Naive thymus-derived CD4-positive, alpha-beta T cell (primary cell): ENCODE measurements at regions of chr1 and their contacts with region 1.

Region 1: DNA sequence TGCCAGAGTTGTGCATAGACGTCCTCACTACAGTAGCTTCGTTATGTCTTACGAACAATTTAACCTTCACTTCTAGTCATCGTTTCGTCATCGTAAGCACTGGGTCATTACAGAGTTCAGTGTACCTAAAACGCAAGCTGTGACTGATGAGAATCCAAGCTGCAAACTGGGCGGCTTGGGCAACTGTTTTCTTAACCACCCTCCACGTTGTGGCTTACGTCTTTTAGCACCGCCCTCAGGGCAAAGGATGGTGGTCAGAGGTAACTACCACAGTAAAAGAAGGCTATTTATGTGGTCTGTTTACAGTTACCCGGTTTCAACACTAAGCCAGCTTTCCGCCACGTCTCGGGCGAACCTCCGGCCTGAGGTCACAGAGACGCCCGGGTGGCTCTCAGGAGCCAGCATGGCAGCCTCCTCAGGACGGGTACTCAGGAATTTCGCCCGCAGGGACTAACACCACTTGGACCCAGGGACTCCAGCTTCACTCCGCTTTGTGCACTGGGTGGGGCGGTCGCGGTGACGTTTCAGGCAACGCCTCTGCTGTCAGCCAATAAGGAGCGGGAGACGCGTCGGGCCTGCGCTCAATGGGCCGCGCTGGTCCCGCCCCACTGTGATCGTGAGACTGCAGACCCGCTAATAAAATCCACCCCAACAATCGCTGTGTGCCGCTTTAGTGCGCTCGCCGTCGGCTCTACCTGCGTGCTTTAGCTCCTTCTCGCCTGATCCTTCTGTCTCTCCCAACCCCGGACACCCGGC is at the start of gene CTH:
- DNase-seq: peak; percentile 81 to 94 (median 92)
- ATAC-seq: peak; percentile 96
- H3K4me3 ChIP-seq: peak within 1 kb of the TSS; percentile 85
- H3K4me3 Mint-ChIP-seq: peak within 1 kb of the TSS; percentile 90 to 100 (median 98)
- H3K27ac ChIP-seq: peak within 1 kb of the TSS; percentile 85
- H3K27ac Mint-ChIP-seq: peak within 1 kb of the TSS; percentile 82 to 99 (median 96)
- H3K4me1 ChIP-seq: peaks cover 4 to 9% of the 10 kb centered on the region in 2 donors
- H3K4me1 Mint-ChIP-seq: peaks cover 5 to 26% (median 24%) of the 10 kb centered on the region in 7 donors
- H3K27me3 ChIP-seq: no peaks in the 10 kb centered on the region
- H3K27me3 Mint-ChIP-seq: peaks cover 0 to 10% (median 0%) of the 10 kb centered on the region in 5 donors
- total RNA-seq, gene CTH: 2.6 to 7.1 (median 5.1) TPM

Region 2: DNA sequence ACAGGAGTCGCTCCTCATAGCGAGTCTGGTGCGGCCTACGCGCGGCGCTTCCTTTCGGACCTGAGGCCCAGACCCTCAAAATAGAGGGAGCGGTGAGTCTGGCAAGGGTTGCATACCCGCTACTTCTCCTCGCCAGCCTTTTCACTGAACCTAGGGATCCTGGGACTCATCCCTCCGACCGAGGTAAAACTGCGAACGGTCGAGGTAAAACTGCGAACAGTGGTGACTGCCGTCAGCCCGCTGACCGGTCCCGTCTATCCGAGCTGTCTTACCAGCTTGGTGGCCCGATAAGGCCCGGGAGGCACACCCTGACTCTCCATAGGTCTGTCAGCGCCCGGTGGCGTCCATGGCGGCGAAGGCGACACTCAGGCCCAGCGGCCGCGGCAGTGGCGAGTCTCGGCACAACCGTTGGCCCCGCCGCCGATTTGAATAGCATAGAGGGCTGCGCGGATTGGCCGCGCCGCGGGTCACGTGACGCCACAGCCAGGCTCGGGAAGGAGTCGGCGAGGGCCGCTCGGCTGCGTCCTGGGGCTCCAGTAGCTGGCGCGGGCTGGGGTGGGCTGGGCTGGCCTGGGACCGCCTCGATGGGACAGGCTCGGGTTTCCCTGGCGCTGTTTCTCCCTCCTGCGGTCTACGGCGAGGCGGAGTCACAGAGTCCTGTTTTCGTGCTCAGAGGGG is 1914.0 kb before region 1 on chr1 and contains the start of gene DEPDC1:
- CTCF ChIA-PET with region 1: no interaction called
- POLR2A ChIA-PET with region 1: no interaction called
- intact Hi-C with region 1: loop called in 1 of 2 experiments (anchors 5 kb)
- DNase-seq: peak; percentile 10 to 91 (median 42)
- ATAC-seq: peak; percentile 94
- H3K4me3 ChIP-seq: peak within 1 kb of the TSS; percentile 70
- H3K4me3 Mint-ChIP-seq: peak within 1 kb of the TSS; percentile 68 to 94 (median 81)
- H3K27ac ChIP-seq: no peak within 1 kb of the TSS
- H3K27ac Mint-ChIP-seq: peak within 1 kb of the TSS in 1 of 9 donors; percentile 87
- H3K4me1 ChIP-seq: peaks cover 0 to 5% of the 10 kb centered on the region in 2 donors
- H3K4me1 Mint-ChIP-seq: peaks cover 0 to 35% (median 13%) of the 10 kb centered on the region in 7 donors
- H3K27me3 ChIP-seq: no peaks in the 10 kb centered on the region
- H3K27me3 Mint-ChIP-seq: peaks cover 20 to 39% (median 25%) of the 10 kb centered on the region in 5 donors
- total RNA-seq, gene DEPDC1: 0.13 to 12.6 (median 0.24) TPM in 3 of 5 experiments, not detected in the others

Region 3: GRCh38 chr1:70221241-70222121 is 189.3 kb before region 1 on chr1 and contains the start of gene SRSF11:
- CTCF ChIA-PET with region 1: no interaction called
- POLR2A ChIA-PET with region 1: interaction called, 10 read pairs
- intact Hi-C with region 1: loop called (anchors 1 kb)
- DNase-seq: peak; percentile 93 to 98 (median 96)
- ATAC-seq: peak; percentile 98
- H3K4me3 ChIP-seq: peak within 1 kb of the TSS; percentile 85
- H3K4me3 Mint-ChIP-seq: peak within 1 kb of the TSS; percentile 86 to 95 (median 91)
- H3K27ac ChIP-seq: peak within 1 kb of the TSS; percentile 95
- H3K27ac Mint-ChIP-seq: peak within 1 kb of the TSS; percentile 92 to 99 (median 96)
- H3K4me1 ChIP-seq: peaks cover 22 to 32% of the 10 kb centered on the region in 2 donors
- H3K4me1 Mint-ChIP-seq: peaks cover 29 to 65% (median 54%) of the 10 kb centered on the region in 7 donors
- H3K27me3 ChIP-seq: no peaks in the 10 kb centered on the region
- H3K27me3 Mint-ChIP-seq: peaks cover 0 to 2% (median 0%) of the 10 kb centered on the region in 5 donors
- total RNA-seq, gene SRSF11: 190 to 413 (median 372) TPM

Region 4: GRCh38 chr1:70354332-70355110 is 56.3 kb before region 1 on chr1 and contains the start of gene ANKRD13C:
- CTCF ChIA-PET with region 1: interaction called, 4 read pairs
- POLR2A ChIA-PET with region 1: interaction called, 81 read pairs
- intact Hi-C with region 1: loop called (anchors 1 kb)
- DNase-seq: peak; percentile 81 to 97 (median 95)
- ATAC-seq: peak; percentile 93
- H3K4me3 ChIP-seq: peak within 1 kb of the TSS; percentile 80
- H3K4me3 Mint-ChIP-seq: peak within 1 kb of the TSS; percentile 87 to 99 (median 95)
- H3K27ac ChIP-seq: peak within 1 kb of the TSS; percentile 92
- H3K27ac Mint-ChIP-seq: peak within 1 kb of the TSS; percentile 96 to 100 (median 98)
- H3K4me1 ChIP-seq: peaks cover 4 to 29% of the 10 kb centered on the region in 2 donors
- H3K4me1 Mint-ChIP-seq: peaks cover 37 to 63% (median 48%) of the 10 kb centered on the region in 7 donors
- H3K27me3 ChIP-seq: no peaks in the 10 kb centered on the region
- H3K27me3 Mint-ChIP-seq: no peaks in the 10 kb centered on the region
- total RNA-seq, gene ANKRD13C: 23.8 to 31.4 (median 28.1) TPM

Region 5: DNA sequence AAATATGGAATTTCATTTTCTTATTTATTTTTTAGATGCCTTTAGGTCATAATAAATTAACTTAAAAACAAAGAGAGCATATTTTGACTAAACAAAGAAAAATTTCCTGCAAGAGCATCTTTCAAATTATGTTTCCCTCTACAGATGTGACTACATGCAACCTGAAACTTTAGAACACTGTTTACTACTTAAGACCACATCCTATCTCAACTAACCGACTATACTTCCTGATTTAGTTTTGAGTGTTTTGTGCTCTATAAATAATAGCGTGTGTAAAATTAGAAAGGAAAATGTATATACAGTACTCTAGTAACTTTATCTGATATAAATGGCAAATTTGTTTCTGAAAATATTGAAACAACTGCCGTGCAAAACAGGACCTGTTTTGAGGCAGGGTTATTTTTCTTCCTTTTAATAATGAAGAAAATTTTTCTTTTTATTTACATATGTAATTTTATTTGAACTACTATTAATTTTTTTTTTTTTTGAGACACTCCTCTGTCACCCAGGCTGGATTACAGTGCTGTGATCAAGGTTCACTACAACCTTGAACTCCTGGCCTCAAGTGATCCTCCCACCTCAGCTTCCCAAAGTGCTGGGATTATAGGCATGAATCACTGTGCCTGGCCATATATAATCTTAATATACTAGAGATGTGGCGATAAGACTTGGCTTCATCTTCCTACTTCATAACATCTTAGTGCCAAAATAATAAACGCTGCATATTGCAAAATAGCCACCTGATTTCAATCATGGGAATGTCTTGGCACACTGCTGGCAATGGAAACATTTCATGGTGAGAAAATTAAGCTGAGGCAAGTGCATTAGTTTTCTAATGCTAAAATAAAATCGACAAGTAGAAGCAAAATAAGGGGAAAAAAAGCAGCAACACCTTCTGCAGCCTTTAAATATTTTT is 657.8 kb after region 1 on chr1:
- CTCF ChIA-PET with region 1: no interaction called
- POLR2A ChIA-PET with region 1: no interaction called
- intact Hi-C with region 1: loop called in 1 of 2 experiments (anchors 5 kb)
- DNase-seq: no peak
- ATAC-seq: no peak
- H3K4me3 ChIP-seq: no peak overlapping the region
- H3K4me3 Mint-ChIP-seq: peak overlapping the region in 1 of 10 donors; percentile 54
- H3K27ac ChIP-seq: no peak overlapping the region
- H3K27ac Mint-ChIP-seq: peak overlapping the region in 5 of 9 donors; percentile 14 to 84 (median 40)
- H3K4me1 ChIP-seq: no peaks in the 10 kb centered on the region
- H3K4me1 Mint-ChIP-seq: peaks cover 7 to 38% (median 10%) of the 10 kb centered on the region in 7 donors
- H3K27me3 ChIP-seq: no peaks in the 10 kb centered on the region
- H3K27me3 Mint-ChIP-seq: no peaks in the 10 kb centered on the region